Panc1 (cell line): ENCODE measurements at regions of chr5 and their contacts with region 1.

Region 1: GRCh38 chr5:138736293-138736692 is 16.9 kb upstream of the CTNNA1 start:
- DNase-seq: no peak
- ATAC-seq: no peak
- H3K4me3 ChIP-seq: no peak overlapping the region
- H3K27ac ChIP-seq: no peak overlapping the region
- H3K4me1 ChIP-seq: no peaks in the 10 kb centered on the region
- H3K27me3 ChIP-seq: no peaks in the 10 kb centered on the region
- CTCF ChIP-seq: no peak

Region 2: GRCh38 chr5:139167952-139168730 is 431.8 kb after region 1 on chr5:
- CTCF ChIA-PET with region 1: no interaction called
- POLR2A ChIA-PET with region 1: no interaction called
- in situ Hi-C with region 1: no loop called
- intact Hi-C with region 1: no loop called
- DNase-seq: no peak
- ATAC-seq: no peak
- H3K4me3 ChIP-seq: no peak overlapping the region
- H3K27ac ChIP-seq: no peak overlapping the region
- H3K4me1 ChIP-seq: no peaks in the 10 kb centered on the region
- H3K27me3 ChIP-seq: no peaks in the 10 kb centered on the region
- CTCF ChIP-seq: no peak

Region 3: GRCh38 chr5:139363937-139364336 is 627.6 kb after region 1 on chr5:
- CTCF ChIA-PET with region 1: no interaction called
- POLR2A ChIA-PET with region 1: no interaction called
- in situ Hi-C with region 1: no loop called
- intact Hi-C with region 1: no loop called
- DNase-seq: no peak
- ATAC-seq: no peak
- H3K4me3 ChIP-seq: no peak overlapping the region
- H3K27ac ChIP-seq: no peak overlapping the region
- H3K4me1 ChIP-seq: no peaks in the 10 kb centered on the region
- H3K27me3 ChIP-seq: no peaks in the 10 kb centered on the region
- CTCF ChIP-seq: no peak

Region 4: DNA sequence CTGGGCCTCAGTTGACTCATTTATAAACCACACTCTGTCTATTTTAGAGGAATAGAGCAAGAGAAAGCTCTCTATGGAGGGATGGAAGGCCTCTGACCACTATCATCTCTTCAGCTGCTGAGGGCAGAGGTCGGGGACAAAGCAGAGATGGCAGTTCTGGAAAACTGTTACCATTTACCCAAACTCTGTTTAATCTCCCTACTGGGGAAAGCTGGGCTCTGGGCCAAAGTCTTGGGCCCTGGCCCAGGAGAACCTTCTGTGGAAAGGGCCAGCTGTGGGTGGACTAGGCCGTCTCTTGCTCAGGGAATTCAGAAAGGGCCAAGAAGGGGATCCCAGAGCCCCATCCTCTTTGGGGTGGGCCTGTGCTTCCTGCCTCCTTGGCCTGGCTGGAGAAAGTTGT is 1159.4 kb after region 1 on chr5:
- CTCF ChIA-PET with region 1: interaction called, 10 read pairs
- POLR2A ChIA-PET with region 1: no interaction called
- in situ Hi-C with region 1: no loop called
- intact Hi-C with region 1: no loop called
- DNase-seq: no peak
- ATAC-seq: no peak
- H3K4me3 ChIP-seq: no peak overlapping the region
- H3K27ac ChIP-seq: no peak overlapping the region
- H3K4me1 ChIP-seq: no peaks in the 10 kb centered on the region
- H3K27me3 ChIP-seq: no peaks in the 10 kb centered on the region
- CTCF ChIP-seq: no peak